Endothelial cell of umbilical vein (primary cell): ENCODE measurements at regions of chr2 and their contacts with region 1.

Region 1: GRCh38 chr2:112685271-112685884 is 35.4 kb upstream of the NT5DC4 start:
- DNase-seq: no peak
- H3K4me3 ChIP-seq: no peak overlapping the region
- H3K27ac ChIP-seq: no peak overlapping the region
- H3K4me1 ChIP-seq: peaks cover 27% of the 10 kb centered on the region
- H3K27me3 ChIP-seq: no peaks in the 10 kb centered on the region
- CTCF ChIP-seq: peak in 1 of 2 donors; percentile 16
- POLR2A ChIP-seq: no peak

Region 2: DNA sequence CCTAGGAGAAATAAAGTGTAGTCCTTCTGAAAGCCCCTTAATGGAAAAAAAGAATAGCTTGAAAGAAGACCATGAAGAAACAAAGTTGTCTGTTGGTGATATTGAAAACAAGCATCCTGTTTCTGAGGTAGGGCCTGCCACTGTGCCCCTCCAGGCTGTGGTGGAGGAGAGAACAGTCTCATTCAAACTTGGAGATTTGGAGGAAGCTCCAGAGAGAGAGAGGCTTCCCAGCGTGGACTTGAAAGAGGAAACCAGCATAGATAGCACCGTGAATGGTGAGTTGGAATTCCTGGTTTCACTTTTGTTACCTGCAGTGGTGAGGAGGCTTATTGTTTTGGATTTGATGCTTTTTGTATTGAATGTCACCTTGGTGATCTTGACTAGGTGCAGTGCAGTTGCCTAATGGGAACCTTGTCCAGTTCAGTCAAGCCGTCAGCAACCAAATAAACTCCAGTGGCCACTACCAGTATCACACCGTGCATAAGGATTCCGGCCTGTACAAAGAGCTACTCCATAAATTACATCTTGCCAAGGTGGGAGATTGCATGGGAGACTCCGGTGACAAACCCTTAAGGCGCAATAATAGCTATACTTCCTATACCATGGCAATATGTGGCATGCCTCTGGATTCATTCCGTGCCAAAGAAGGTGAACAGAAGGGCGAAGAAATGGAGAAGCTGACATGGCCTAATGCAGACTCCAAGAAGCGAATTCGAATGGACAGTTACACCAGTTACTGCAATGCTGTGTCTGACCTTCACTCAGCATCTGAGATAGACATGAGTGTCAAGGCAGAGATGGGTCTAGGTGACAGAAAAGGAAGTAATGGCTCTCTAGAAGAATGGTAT is 26.3 kb before region 1 on chr2:
- CTCF ChIA-PET with region 1: interaction called, 11 read pairs
- POLR2A ChIA-PET with region 1: no interaction called
- dilution Hi-C with region 1: no loop called
- intact Hi-C with region 1: no loop called
- DNase-seq: no peak
- H3K4me3 ChIP-seq: no peak overlapping the region
- H3K27ac ChIP-seq: no peak overlapping the region
- H3K4me1 ChIP-seq: peaks cover 17% of the 10 kb centered on the region
- H3K27me3 ChIP-seq: no peaks in the 10 kb centered on the region
- CTCF ChIP-seq: no peak
- POLR2A ChIP-seq: no peak

Region 3: GRCh38 chr2:112666764-112667122 is 18.6 kb before region 1 on chr2:
- CTCF ChIA-PET with region 1: interaction called, 34 read pairs
- POLR2A ChIA-PET with region 1: no interaction called
- dilution Hi-C with region 1: no loop called
- intact Hi-C with region 1: no loop called
- DNase-seq: no peak
- H3K4me3 ChIP-seq: no peak overlapping the region
- H3K27ac ChIP-seq: no peak overlapping the region
- H3K4me1 ChIP-seq: peaks cover 21% of the 10 kb centered on the region
- H3K27me3 ChIP-seq: no peaks in the 10 kb centered on the region
- CTCF ChIP-seq: no peak
- POLR2A ChIP-seq: no peak

Region 4: GRCh38 chr2:112674229-112674628 is 11.1 kb before region 1 on chr2:
- CTCF ChIA-PET with region 1: interaction called, 34 read pairs
- POLR2A ChIA-PET with region 1: no interaction called
- dilution Hi-C with region 1: no loop called
- intact Hi-C with region 1: loop called (anchors 1 kb)
- DNase-seq: peak; percentile 85
- H3K4me3 ChIP-seq: no peak overlapping the region
- H3K27ac ChIP-seq: peak overlapping the region; percentile 67
- H3K4me1 ChIP-seq: peaks cover 33% of the 10 kb centered on the region
- H3K27me3 ChIP-seq: no peaks in the 10 kb centered on the region
- CTCF ChIP-seq: no peak
- POLR2A ChIP-seq: no peak